Activated CD4-positive, alpha-beta T cell treated with anti-CD3 and anti-CD28 coated beads, Interleukin-2, amount 10 ng/mL, durations not matched to agents 24 days and 14 days (primary cell): ENCODE measurements at regions of chr15 and their contacts with region 1.

Region 1: GRCh38 chr15:92989470-92989869 is 89.3 kb downstream of the CHD2 start:
- DNase-seq: no peak
- H3K4me3 Mint-ChIP-seq: no peak overlapping the region
- H3K27ac Mint-ChIP-seq: peak overlapping the region; percentile 36
- H3K4me1 Mint-ChIP-seq: peaks cover 11% of the 10 kb centered on the region
- H3K27me3 Mint-ChIP-seq: no peaks in the 10 kb centered on the region

Region 2: DNA sequence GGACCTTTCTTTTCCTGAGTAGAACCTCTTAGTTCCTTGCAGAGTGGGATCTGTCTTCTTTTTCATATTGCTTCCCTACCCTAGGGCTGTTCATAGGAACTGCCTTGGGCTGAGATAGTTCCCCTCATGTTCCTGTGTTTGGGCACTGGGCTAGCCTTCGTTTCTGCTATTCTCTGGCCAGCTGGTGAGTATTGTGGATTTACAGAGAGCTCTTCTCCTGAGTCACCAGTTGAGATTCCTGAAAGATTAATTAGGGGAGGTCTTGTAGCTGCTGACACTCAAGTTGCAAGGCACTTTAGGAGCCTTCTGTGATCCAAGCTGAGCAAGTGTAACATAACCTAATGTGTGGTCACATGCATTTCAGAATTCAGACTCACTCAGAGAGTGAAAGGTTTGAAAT is 58.7 kb before region 1 on chr15:
- intact Hi-C with region 1: loop called (anchors 10 kb)
- DNase-seq: no peak
- H3K4me3 Mint-ChIP-seq: no peak overlapping the region
- H3K27ac Mint-ChIP-seq: no peak overlapping the region
- H3K4me1 Mint-ChIP-seq: peaks cover 34% of the 10 kb centered on the region
- H3K27me3 Mint-ChIP-seq: no peaks in the 10 kb centered on the region